B cell (primary cell): ENCODE measurements at regions of chr6 and their contacts with region 1.

Region 1: DNA sequence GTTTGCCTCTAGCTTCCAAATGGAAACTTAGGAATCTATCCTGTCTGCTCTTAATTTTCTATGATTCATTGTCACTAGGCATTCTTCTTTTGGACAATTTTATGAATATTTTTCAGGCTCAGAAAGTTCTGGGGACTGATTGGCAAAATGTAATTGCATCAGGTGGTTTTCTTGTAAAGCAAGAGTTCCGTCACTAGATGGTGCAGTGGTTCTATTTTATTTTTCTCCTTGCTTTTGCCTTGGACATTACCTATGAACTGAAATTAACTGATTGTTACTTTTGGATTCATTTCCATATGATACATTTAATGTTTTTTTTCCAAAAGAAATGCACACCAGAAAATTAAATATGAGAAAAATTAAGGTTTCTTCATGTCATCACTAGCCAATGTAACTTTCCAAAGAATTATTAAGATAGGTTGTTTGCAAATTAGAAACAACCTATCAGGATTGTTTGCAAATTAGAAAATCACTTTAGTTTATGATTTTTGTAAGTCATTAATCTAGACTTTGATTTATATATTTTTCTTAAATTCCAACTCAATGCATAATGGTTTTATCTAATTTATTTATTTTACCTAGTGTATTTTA is 48.0 kb downstream of the TMEM170B start:
- DNase-seq: peak; percentile 28
- ATAC-seq: no peak
- H3K4me3 ChIP-seq: no peak overlapping the region
- H3K4me3 Mint-ChIP-seq: no peak overlapping the region
- H3K27ac ChIP-seq: no peak overlapping the region
- H3K27ac Mint-ChIP-seq: no peak overlapping the region
- H3K4me1 ChIP-seq: no peaks in the 10 kb centered on the region
- H3K4me1 Mint-ChIP-seq: no peaks in the 10 kb centered on the region
- H3K27me3 ChIP-seq: no peaks in the 10 kb centered on the region
- H3K27me3 Mint-ChIP-seq: peaks cover 4% of the 10 kb centered on the region
- CTCF ChIP-seq: peak; percentile 44

Region 2: DNA sequence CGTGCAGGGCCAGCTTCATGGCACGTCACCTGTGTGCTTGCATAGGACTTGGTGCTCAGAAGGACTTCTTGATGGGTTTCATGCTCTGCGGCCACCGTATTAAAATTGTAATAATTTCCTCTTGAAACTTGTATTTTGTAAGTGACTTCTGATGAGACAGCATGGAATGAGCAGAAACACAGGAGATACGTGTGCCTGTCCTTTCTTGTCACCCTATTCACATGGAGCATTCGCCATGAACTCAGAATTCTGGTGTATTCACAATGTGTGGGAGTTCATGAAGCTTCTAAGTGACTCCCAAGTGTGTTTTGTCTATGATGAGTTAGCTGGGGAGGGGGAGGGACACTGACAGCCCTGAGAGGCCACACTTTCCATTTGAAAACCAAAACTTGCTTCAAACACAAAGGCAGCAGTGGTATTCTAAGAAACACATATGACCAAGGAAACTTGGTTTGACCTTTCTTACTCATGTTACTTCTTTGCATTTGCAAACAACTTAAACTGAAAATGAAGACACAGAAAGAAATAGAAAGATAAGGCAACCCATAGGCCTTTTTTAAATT is 261.0 kb before region 1 on chr6:
- CTCF ChIA-PET with region 1: no interaction called
- POLR2A ChIA-PET with region 1: interaction called, 14 read pairs
- intact Hi-C with region 1: no loop called
- DNase-seq: no peak
- ATAC-seq: peak; percentile 28
- H3K4me3 ChIP-seq: no peak overlapping the region
- H3K4me3 Mint-ChIP-seq: peak overlapping the region; percentile 52
- H3K27ac ChIP-seq: peak overlapping the region in 1 of 2 donors; percentile 56
- H3K27ac Mint-ChIP-seq: peak overlapping the region; percentile 74
- H3K4me1 ChIP-seq: peaks cover 24 to 32% of the 10 kb centered on the region in 2 donors
- H3K4me1 Mint-ChIP-seq: peaks cover 55% of the 10 kb centered on the region
- H3K27me3 ChIP-seq: no peaks in the 10 kb centered on the region
- H3K27me3 Mint-ChIP-seq: no peaks in the 10 kb centered on the region
- CTCF ChIP-seq: no peak

Region 3: DNA sequence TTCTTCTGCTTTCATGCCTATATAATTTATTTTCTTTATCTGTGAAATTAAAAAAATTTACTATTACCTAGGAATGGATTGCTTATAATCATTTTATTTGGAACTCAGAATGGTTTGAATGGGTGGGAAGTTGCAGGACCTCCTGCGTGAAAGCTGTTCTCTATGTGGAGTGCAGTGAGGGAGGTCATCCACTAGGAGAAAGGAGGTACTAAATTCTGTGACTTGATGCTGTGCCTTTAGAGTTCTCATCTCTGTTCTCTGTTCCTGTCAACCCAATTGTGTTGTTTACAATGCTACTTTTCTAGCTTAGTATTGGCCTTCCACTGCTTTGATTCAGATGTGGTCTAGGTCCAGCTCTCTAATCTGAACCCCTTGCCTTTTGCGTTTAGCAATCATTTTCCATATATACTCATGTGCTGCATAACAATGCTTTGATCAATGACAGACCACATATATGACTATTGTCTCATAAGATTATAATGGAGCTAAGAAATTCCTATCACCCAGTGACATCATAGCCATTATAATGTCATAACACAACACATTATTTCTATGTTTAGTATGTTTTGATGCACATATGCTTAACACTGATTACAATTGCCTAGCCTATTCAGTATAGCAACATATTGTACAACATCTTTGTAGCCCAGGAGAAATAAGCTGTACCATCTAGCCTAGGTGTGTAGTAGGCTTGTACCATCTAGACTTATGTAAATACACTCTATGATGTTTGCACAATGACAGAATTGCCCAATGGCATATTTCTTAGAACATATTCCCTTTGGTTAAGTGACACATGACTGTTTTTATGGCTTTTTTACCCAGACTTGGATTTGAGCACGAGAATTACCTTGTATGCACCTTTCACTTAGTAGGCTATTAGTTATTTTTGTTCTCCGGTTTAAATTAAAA is 361.8 kb after region 1 on chr6:
- CTCF ChIA-PET with region 1: no interaction called
- POLR2A ChIA-PET with region 1: no interaction called
- intact Hi-C with region 1: no loop called
- DNase-seq: peak; percentile 23
- ATAC-seq: no peak
- H3K4me3 ChIP-seq: no peak overlapping the region
- H3K4me3 Mint-ChIP-seq: no peak overlapping the region
- H3K27ac ChIP-seq: no peak overlapping the region
- H3K27ac Mint-ChIP-seq: no peak overlapping the region
- H3K4me1 ChIP-seq: no peaks in the 10 kb centered on the region
- H3K4me1 Mint-ChIP-seq: no peaks in the 10 kb centered on the region
- H3K27me3 ChIP-seq: peaks cover 0 to 3% (median 0%) of the 10 kb centered on the region in 4 experiments
- H3K27me3 Mint-ChIP-seq: peaks cover 4% of the 10 kb centered on the region
- CTCF ChIP-seq: peak; percentile 41

Region 4: DNA sequence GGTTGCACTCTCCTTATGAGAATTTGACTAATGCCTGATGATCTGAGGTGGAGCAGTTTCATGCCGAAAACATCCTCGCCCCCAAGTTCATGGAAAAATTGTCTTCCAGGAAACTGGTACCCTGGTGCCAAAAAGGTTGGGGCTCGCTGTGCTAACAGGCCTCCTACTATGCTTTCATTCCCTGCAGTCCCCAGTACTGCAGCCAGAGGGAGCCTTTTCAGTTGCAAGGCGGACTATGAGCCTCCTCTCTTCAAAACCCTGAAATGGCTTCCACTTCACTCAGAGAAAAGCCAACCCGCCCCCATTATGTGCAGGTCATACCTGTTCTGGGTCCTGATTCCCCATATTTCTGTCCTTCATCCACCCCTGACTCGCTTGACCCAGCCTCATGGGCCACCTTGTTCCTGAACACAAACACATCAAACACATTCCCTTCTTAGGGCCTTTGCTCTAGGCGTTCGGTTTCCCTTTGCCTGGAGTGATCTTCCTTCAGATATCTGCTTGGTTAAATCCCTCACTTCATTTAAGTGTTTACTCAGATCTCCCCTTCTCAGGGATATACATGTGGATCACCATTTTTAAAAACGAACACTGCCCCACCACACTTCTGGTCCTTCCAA is 1304.8 kb after region 1 on chr6:
- CTCF ChIA-PET with region 1: interaction called, 4 read pairs
- POLR2A ChIA-PET with region 1: no interaction called
- intact Hi-C with region 1: loop called (anchors 5 kb)
- DNase-seq: peak; percentile 18
- ATAC-seq: no peak
- H3K4me3 ChIP-seq: no peak overlapping the region
- H3K4me3 Mint-ChIP-seq: no peak overlapping the region
- H3K27ac ChIP-seq: no peak overlapping the region
- H3K27ac Mint-ChIP-seq: no peak overlapping the region
- H3K4me1 ChIP-seq: peaks cover 0 to 4% of the 10 kb centered on the region in 2 donors
- H3K4me1 Mint-ChIP-seq: peaks cover 4% of the 10 kb centered on the region
- H3K27me3 ChIP-seq: no peaks in the 10 kb centered on the region
- H3K27me3 Mint-ChIP-seq: peaks cover 18% of the 10 kb centered on the region
- CTCF ChIP-seq: peak; percentile 50